ENCODE measurements at regions of chr1 and their contacts with region 1.

Region 1: GRCh38 chr1:158203693-158204457 is 23.2 kb downstream of the CD1D start:
- DNase-seq: peak; percentile 32
- ATAC-seq: peak; percentile 76
- H3K4me3 Mint-ChIP-seq: no peak overlapping the region
- H3K27ac Mint-ChIP-seq: no peak overlapping the region
- H3K4me1 Mint-ChIP-seq: no peaks in the 10 kb centered on the region
- H3K27me3 Mint-ChIP-seq: peaks cover 21% of the 10 kb centered on the region

Region 2: DNA sequence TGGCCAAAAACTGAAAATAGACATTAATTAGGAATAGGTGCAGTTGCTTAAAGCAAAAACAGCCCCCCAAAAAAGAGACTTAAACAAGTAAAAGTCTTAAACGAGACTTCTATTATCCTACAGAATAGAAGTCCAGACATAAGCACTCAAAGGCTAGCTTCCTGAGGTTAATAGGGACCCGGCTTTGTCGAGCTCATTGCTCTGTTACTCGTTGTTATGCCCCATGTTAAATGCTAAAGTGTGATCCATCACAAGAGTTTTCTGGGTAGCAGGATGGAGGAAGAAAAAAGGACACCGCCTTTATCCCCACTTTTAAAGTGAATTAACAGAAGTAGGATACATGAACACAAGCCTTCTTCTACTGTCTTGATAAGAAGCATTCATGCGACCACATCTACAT is 12.6 kb before region 1 on chr1:
- CTCF ChIA-PET with region 1: interaction called, 16 read pairs
- POLR2A ChIA-PET with region 1: no interaction called
- DNase-seq: no peak
- ATAC-seq: no peak
- H3K4me3 Mint-ChIP-seq: no peak overlapping the region
- H3K27ac Mint-ChIP-seq: no peak overlapping the region
- H3K4me1 Mint-ChIP-seq: no peaks in the 10 kb centered on the region
- H3K27me3 Mint-ChIP-seq: peaks cover 18% of the 10 kb centered on the region

Region 3: GRCh38 chr1:158329733-158330132 is 125.9 kb after region 1 on chr1:
- CTCF ChIA-PET with region 1: interaction called, 41 read pairs
- POLR2A ChIA-PET with region 1: no interaction called
- DNase-seq: peak; percentile 26
- ATAC-seq: no peak
- H3K4me3 Mint-ChIP-seq: no peak overlapping the region
- H3K27ac Mint-ChIP-seq: no peak overlapping the region
- H3K4me1 Mint-ChIP-seq: peaks cover 15% of the 10 kb centered on the region
- H3K27me3 Mint-ChIP-seq: peaks cover 3% of the 10 kb centered on the region

Region 4: GRCh38 chr1:158527190-158527815 is 323.4 kb after region 1 on chr1:
- CTCF ChIA-PET with region 1: interaction called, 16 read pairs
- POLR2A ChIA-PET with region 1: no interaction called
- DNase-seq: no peak
- ATAC-seq: no peak
- H3K4me3 Mint-ChIP-seq: no peak overlapping the region
- H3K27ac Mint-ChIP-seq: no peak overlapping the region
- H3K4me1 Mint-ChIP-seq: no peaks in the 10 kb centered on the region
- H3K27me3 Mint-ChIP-seq: peaks cover 18% of the 10 kb centered on the region

Measured in activated CD8-positive, alpha-beta T cell treated with anti-CD3 and anti-CD28 coated beads, Interleukin-2, amount 10 ng/mL, durations not matched to agents 7 days and 5 days (primary cell).